Psoas muscle (tissue), 8 donors: ENCODE measurements at regions of chr15 and their contacts with region 1.

Region 1: GRCh38 chr15:77024271-77025082 is 29.6 kb downstream of the PSTPIP1 start:
- DNase-seq: peak; percentile 69 to 83
- ATAC-seq: peak; percentile 62 to 84 (median 70)
- H3K4me3 ChIP-seq: no peak overlapping the region
- H3K27ac ChIP-seq: no peak overlapping the region
- H3K4me1 ChIP-seq: no peaks in the 10 kb centered on the region
- H3K27me3 ChIP-seq: no peaks in the 10 kb centered on the region
- CTCF ChIP-seq: peak; percentile 98

Region 2: DNA sequence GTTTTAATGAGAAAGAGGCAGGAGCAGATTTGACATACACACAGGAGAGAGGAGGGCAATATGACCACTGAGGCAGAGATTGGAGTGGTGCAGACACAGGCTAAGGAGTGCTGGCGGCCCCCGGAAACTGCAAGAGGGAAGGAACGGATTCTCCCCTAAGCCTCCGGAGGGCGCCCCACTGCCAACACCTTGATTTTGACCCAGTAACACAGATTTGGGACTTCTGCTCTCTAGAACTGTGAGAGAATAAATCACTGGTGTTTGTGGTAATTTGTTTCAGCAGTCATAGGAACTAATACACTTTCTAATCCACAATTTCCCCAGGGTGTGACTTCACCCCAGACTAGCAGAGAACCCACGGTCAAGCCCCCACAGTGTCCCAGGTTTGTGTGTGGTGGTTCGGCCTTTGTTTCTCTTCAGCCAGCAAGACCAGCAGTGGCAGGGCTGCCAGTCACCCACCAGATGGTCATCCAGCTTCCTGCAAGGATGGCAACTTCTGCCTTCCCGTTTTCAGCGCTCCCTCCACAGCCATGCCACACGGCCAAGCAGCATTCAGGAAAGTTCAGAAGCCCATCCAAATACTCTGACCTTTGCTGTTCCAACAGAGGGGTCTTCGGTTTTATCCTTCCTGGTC is 70.0 kb after region 1 on chr15:
- intact Hi-C with region 1: loop called in 1 of 2 experiments (anchors 5 kb)
- DNase-seq: no peak
- ATAC-seq: no peak
- H3K4me3 ChIP-seq: no peak overlapping the region
- H3K27ac ChIP-seq: no peak overlapping the region
- H3K4me1 ChIP-seq: no peaks in the 10 kb centered on the region
- H3K27me3 ChIP-seq: no peaks in the 10 kb centered on the region
- CTCF ChIP-seq: no peak

Region 3: GRCh38 chr15:77107531-77108355 is 83.3 kb after region 1 on chr15:
- intact Hi-C with region 1: loop called in 1 of 2 experiments (anchors 5 kb)
- DNase-seq: peak; percentile 47 to 73
- ATAC-seq: peak; percentile 85 to 94 (median 92)
- H3K4me3 ChIP-seq: no peak overlapping the region
- H3K27ac ChIP-seq: peak overlapping the region; percentile 56
- H3K4me1 ChIP-seq: peaks cover 22% of the 10 kb centered on the region
- H3K27me3 ChIP-seq: no peaks in the 10 kb centered on the region
- CTCF ChIP-seq: peak; percentile 73